Endothelial cell of umbilical vein (primary cell): ENCODE measurements at regions of chr22 and their contacts with region 1.

Region 1: DNA sequence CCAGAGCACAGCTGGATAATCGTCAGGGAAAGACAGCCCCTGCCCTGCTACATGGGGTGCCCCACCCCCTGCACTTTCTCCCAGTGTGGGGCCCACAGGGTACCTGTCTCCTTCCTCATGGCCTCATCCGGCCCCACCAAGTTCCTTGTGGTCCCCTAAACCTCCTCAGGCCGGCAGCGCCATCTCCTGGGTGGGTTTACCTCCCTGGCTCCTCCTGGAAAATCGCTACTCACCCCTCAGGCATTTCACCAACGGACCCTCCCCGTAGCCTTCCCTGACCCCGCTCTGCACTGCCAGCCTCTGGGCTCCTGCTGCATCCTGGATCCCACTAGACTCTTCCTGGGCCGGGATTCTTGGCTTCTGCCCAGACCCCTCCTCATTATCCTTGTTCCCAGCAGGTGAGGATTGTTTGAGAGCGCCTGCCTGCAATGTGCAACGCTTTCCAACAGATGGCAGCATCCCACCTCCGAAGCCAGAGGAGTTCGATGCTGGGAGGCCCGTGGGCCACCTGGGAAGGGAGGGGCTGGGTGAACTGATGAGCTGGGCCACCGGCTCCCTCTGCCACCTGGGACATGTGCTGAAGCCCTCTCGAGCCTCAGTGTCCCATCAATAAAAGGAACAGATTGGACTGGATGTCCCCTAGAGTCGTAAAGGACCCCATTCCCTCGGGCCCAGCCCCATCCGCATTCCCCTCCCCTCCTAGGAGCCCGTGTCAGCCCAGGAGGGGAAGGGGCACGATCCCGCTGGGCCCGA is 44.2 kb upstream of the TTLL12 start:
- DNase-seq: peak; percentile 50
- H3K4me3 ChIP-seq: no peak overlapping the region
- H3K27ac ChIP-seq: no peak overlapping the region
- H3K4me1 ChIP-seq: no peaks in the 10 kb centered on the region
- H3K27me3 ChIP-seq: no peaks in the 10 kb centered on the region
- CTCF ChIP-seq: peak; percentile 83 to 91
- POLR2A ChIP-seq: no peak

Region 2: DNA sequence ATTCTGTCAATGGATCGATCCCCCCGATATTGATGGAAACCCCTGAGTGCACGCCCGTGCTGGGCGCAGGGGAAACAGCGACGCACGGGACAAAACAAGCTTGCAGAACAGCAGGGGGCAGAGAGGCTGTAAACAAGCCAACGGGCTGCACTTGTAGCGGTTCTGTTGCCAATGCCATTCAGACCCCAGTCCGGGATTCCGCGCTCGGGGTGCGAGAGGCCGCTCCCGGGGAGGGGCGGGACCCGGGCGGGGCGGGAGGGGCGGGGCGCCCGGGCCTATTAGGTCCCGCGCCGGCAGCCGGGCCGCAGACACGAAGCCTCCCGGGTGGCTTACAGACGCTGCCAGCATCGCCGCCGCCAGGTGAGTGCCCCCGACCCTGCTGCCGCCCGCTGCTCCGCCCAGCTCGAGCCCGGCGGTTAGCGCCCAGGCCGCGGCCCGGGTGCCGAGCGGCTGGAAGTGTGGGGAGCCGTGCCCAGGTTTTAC is 120.7 kb before region 1 on chr22 and contains the start of gene BIK:
- CTCF ChIA-PET with region 1: interaction called, 12 read pairs
- POLR2A ChIA-PET with region 1: no interaction called
- dilution Hi-C with region 1: no loop called
- intact Hi-C with region 1: no loop called
- DNase-seq: peak; percentile 47
- H3K4me3 ChIP-seq: peak within 1 kb of the TSS; percentile 19 to 51 (median 50)
- H3K27ac ChIP-seq: no peak within 1 kb of the TSS
- H3K4me1 ChIP-seq: no peaks in the 10 kb centered on the region
- H3K27me3 ChIP-seq: peaks cover 16 to 26% of the 10 kb centered on the region in 2 experiments
- CTCF ChIP-seq: peak; percentile 19 to 53
- POLR2A ChIP-seq: no peak
- total RNA-seq, gene BIK: 0.49 TPM in 1 of 2 replicates, not detected in the other

Region 3: GRCh38 chr22:43263645-43264514 is 32.7 kb after region 1 on chr22:
- CTCF ChIA-PET with region 1: interaction called, 12 read pairs
- POLR2A ChIA-PET with region 1: no interaction called
- dilution Hi-C with region 1: no loop called
- intact Hi-C with region 1: loop called (anchors 1 kb)
- DNase-seq: peak; percentile 97
- H3K4me3 ChIP-seq: peak overlapping the region in 1 of 3 experiments; percentile 30
- H3K27ac ChIP-seq: peak overlapping the region; percentile 93
- H3K4me1 ChIP-seq: peaks cover 23% of the 10 kb centered on the region
- H3K27me3 ChIP-seq: no peaks in the 10 kb centered on the region
- CTCF ChIP-seq: no peak
- POLR2A ChIP-seq: no peak

Region 4: DNA sequence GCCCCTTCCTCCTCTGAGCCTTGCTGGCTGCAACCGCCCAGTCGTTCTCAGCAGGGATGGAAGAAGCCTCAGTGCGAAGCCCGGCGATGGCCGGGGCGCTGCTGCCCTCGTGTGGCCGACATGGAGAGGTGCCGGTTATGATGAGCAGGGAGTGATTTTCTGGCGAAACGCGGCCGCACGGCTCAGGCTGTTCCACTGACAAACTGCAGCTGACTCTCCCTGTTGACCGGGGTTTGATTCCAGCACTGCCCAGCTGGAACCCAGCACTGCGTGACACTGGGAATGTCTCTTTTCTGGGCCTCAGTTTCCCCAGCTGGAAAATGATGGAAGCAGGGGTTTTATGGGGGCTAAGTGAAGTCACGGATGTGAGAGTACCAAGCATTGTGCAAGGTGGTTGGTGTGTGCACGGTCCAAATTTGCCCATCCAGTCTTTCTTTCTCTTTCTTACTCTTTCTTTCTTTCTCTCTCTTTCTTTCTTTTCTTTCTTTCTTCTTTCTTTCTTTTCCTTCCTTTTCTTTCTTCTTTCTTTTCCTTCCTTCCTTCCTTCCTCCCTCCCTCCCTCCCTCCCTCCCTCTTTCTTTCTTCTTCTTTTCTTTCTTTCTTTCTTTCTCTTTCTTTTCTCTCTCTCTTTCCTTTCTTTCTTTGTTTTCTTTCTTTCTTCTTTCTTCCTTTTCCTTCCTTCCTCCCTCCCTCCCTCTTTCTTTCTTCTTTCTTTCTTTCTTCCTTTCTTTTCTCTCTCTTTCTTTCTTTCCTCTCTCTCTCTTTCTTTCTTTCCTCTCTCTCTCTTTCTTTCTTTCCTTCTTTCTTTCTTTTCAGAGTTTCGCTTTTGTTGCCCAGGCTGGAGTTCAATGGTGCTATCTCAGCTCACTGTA is 154.9 kb after region 1 on chr22:
- CTCF ChIA-PET with region 1: interaction called, 89 read pairs
- POLR2A ChIA-PET with region 1: no interaction called
- dilution Hi-C with region 1: no loop called
- intact Hi-C with region 1: loop called (anchors 1 kb)
- DNase-seq: peak; percentile 70
- H3K4me3 ChIP-seq: no peak overlapping the region
- H3K27ac ChIP-seq: no peak overlapping the region
- H3K4me1 ChIP-seq: no peaks in the 10 kb centered on the region
- H3K27me3 ChIP-seq: peaks cover 4 to 10% of the 10 kb centered on the region in 2 experiments
- CTCF ChIP-seq: peak; percentile 91 to 95
- POLR2A ChIP-seq: no peak